Posterior cingulate gyrus (tissue), 11 donors: ENCODE measurements at regions of chr10 and their contacts with region 1.

Region 1: GRCh38 chr10:59181668-59182067 is 5.2 kb downstream of the PHYHIPL start:
- DNase-seq: peak in 2 of 10 donors; percentile 10 to 25

Region 2: DNA sequence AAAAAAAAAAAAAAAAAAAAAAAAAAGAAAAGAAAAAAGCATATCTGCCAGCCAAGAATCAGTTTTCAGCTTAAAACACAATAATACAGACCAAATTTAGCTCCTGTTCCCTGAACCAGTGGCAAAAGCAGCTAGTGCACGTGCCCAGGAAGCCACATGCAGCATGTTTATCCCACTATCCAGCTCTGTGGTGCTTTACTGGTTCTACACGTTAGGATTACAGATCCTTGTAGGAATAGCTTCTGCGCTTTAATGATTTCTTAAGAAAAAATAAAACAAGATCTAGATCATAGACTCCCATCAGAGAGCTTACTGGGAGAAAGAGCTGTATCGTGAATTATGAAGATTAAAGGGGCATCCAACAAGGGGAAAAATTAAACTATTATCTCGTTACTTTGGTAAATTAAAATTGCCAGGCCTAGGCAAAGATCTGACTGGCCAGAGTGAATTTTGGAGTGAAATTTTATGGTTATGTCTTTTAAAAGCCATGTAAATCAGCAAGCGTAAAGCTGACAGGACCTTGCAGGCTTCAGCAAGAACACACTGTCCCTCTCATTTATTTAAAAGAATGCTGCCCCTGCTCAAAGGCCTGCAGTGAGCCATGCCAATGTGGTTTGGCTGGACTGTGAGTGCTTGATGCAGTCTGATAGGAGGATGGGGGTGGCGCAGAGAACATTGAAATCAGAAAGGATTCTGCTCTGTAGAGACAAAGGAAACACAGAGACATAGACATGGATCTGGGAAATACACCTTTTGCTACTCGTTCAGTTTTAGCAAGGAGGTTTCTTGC is 182.5 kb before region 1 on chr10:
- intact Hi-C with region 1: loop called (anchors 5 kb)
- DNase-seq: peak; percentile 64 to 96 (median 80)

Region 3: DNA sequence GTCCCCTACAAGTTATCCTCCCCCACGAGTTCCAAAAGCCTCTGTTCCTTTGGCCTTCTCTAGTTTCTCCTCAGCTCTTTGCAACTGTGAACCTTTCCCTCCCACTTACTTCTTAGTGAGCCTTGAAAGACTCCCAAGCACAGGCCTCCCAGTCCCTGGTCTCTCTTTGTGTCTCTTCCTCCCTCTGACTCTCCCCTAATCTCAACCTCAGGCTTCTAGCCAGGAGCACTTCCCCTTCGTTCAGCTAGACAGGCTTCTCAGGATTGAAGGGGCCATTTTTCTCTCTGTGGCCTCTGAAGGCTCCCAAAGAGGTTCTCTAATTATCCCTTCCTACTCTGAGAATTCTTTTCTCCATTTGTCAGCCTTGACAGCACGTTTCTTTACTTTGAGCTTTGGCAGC is 55.4 kb before region 1 on chr10:
- intact Hi-C with region 1: loop called (anchors 10 kb)
- DNase-seq: no peak

Region 4: DNA sequence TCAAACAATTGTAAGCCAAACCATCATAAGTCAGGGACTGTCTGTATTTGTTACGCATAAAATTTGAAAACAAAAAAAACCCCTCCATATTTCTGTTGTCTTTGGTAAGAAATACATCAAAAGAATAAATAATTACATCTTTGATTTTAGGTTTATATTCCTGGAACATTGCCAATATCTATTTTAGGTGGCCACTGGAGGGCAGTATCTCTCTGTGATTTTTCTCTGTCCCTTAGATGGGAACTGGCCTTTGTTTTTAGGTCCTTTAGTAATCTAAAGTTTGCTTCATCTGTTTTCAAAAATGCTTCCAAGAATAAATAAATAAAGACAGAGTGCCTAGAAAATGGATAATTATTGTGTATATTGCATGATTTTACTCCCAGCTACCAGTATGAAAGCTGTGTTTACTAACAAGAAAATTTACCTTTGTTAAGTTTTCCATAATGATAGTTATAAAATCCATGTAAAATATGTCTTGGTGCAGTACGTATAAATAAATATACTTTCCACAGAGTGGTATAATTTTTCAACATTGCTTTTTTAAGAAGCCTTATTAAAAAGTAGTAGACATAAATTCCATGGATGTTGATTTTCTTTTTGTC is 59.0 kb after region 1 on chr10:
- intact Hi-C with region 1: no loop called
- DNase-seq: no peak